OCI-LY7 (cell line): ENCODE measurements at regions of chr1 and their contacts with region 1.

Region 1: DNA sequence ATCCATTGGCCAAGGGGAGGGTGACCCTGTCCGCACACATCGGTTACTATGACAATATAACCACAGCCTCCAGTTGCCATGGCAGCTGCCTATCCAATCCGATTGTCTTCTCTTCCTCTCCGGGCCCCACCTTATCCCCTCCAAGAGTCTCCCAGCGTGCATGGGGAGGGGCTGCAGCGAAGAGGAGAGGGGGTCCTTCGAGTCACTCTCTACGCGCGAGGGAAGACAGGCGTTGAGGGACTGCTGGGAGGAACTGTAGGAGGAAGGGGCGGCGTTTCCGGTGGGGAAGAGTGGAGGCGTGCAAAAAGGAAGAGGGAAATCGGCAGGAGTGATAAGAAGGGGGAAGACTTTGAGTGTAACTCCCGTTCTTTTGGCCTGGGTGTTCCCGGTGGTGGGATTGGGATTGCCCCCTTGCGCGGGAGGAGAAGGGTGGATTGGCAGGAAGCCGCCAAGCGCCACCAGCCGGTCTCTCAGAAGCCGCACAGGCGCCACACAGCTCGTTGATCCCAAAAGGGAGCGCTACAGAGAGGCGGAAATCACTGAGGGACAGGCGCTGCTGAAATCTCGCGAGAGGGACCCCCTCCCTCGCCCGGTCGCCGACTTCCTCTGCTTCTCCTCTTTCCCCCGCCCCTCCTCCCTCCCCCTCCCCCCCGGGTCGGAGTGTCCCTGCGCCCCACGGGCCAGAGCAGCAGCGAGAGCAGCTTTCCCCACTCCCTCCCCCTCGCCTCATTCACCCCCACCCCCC is 384 bp upstream of the SMG7 start:
- DNase-seq: peak; percentile 94
- H3K4me3 ChIP-seq: peak overlapping the region; percentile 95
- H3K27ac ChIP-seq: peak overlapping the region; percentile 88
- H3K4me1 ChIP-seq: peaks cover 44% of the 10 kb centered on the region
- CTCF ChIP-seq: no peak

Region 2: DNA sequence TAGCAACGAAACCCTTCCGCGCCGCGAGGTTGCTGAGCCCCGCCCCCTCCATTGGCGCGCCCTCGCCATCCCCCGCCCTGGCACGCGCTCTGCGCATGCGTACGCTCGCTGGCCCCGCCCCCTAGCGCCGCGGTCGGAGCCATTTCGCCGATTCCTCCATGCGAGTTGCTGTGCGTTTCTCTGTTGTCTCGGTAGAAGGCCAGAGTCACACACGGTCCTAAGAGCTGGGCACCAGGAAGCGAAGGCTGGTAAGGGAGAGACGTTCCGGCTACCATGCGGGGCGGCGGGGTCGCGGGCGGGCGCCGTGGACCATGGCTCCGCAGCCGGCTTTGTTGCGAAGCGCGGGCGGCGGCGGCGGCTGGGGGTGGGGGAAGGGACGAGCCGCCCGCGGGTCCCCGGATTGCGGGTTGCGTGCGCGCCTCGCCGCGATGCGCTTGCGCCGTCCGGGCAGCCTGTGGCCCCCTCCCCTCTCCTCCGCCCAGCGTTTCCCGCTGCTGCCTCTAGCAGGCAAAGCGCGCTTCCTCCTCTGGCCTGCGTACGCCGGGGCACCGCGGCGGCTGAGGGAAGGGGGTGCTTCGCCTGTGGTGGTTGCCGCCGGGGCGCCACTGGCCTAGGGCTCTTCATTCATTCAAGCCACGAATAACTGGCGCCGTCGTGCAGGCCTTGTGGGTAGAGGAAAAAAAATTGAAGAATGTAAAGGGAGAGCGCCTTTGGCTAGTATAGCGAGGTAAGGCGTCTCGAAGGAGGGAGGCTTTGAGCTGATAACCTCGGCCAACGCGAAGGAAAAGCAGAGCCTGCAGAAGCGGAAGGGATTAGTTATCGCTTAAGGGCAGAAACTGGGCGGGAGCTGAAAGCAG is 632.5 kb before region 1 on chr1 and contains the start of gene DHX9:
- CTCF ChIA-PET with region 1: no interaction called
- POLR2A ChIA-PET with region 1: no interaction called
- intact Hi-C with region 1: loop called (anchors 10 kb)
- DNase-seq: peak; percentile 95
- H3K4me3 ChIP-seq: peak within 1 kb of the TSS; percentile 98
- H3K27ac ChIP-seq: peak within 1 kb of the TSS; percentile 87
- H3K4me1 ChIP-seq: peaks cover 35% of the 10 kb centered on the region
- CTCF ChIP-seq: peak; percentile 55
- total RNA-seq, gene DHX9: 217 and 276 TPM in 2 replicates

Region 3: DNA sequence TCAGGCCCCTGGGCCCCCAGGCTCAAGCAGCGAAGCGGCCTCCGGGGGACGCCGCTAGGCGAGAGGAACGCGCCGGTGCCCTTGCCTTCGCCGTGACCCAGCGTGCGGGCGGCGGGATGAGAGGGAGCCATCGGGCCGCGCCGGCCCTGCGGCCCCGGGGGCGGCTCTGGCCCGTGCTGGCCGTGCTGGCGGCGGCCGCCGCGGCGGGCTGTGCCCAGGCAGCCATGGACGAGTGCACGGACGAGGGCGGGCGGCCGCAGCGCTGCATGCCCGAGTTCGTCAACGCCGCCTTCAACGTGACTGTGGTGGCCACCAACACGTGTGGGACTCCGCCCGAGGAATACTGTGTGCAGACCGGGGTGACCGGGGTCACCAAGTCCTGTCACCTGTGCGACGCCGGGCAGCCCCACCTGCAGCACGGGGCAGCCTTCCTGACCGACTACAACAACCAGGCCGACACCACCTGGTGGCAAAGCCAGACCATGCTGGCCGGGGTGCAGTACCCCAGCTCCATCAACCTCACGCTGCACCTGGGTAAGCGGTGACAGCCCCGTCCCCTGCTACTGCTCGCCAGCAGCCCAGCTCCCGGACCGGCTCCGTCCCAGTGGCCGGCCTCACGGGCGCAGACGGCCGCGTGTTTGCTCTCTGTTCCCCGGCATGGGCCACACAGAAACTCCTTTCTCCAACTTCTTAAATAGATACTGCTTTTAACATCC is 448.2 kb before region 1 on chr1:
- CTCF ChIA-PET with region 1: no interaction called
- POLR2A ChIA-PET with region 1: no interaction called
- intact Hi-C with region 1: loop called (anchors 10 kb)
- DNase-seq: peak; percentile 87
- H3K4me3 ChIP-seq: peak overlapping the region; percentile 77
- H3K27ac ChIP-seq: peak overlapping the region; percentile 54
- H3K4me1 ChIP-seq: peaks cover 51% of the 10 kb centered on the region
- CTCF ChIP-seq: peak; percentile 71

Region 4: GRCh38 chr1:183493548-183494246 is 21.8 kb after region 1 on chr1:
- CTCF ChIA-PET with region 1: interaction called, 4 read pairs
- POLR2A ChIA-PET with region 1: interaction called, 14 read pairs
- intact Hi-C with region 1: no loop called
- DNase-seq: no peak
- H3K4me3 ChIP-seq: no peak overlapping the region
- H3K27ac ChIP-seq: no peak overlapping the region
- H3K4me1 ChIP-seq: peaks cover 98% of the 10 kb centered on the region
- CTCF ChIP-seq: no peak

Region 5: GRCh38 chr1:183543619-183544204 is 71.8 kb after region 1 on chr1:
- CTCF ChIA-PET with region 1: no interaction called
- POLR2A ChIA-PET with region 1: interaction called, 8 read pairs
- intact Hi-C with region 1: loop called (anchors 1 kb)
- DNase-seq: peak; percentile 67
- H3K4me3 ChIP-seq: no peak overlapping the region
- H3K27ac ChIP-seq: no peak overlapping the region
- H3K4me1 ChIP-seq: peaks cover 54% of the 10 kb centered on the region
- CTCF ChIP-seq: peak; percentile 87

Region 6: DNA sequence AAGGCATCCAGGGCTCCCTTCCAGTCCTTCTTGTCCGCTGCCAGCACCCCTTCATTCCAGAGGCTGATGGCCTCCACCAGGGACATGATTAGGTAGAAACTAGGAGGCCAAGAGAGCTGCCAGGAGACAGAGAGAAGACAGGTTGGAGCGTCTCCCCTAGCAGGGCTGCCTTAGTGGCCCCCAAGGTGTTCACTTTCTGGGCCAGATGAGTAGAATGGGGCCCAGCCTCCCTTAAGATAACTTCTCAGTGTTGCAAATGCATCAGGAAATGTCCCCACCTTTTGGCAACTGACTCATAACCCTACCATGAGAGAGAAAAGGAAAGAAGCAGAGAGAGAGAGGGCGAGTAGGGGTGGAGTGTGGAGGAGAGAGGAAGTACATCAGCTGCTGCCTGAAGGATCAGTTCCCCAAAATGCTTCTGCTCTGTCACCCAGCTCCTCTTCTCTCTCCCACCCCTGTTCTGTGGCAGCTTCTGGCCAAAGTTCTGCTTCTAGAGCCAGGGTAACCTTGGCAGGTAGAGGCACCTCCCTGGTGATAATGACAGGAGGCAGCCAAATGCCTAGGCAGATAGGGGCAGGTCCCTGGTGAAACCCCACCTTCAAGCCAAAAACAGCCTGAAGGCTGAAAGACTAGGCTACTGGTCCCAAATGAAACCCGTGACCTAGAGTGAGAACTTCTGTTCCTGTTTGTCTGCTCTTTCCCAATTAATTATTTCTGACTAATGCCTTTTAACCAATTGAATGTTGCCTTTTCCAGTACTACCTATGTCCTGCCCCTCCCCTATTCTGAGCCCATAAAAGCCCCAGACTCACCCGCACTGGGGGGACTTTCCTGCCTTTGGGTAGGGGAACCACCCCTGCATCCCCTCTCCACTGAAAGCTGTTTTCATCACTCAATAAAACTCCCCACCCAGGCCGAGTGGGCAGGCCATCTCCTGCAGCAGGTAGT is 118.6 kb after region 1 on chr1 and contains the start of gene NCF2:
- CTCF ChIA-PET with region 1: no interaction called
- POLR2A ChIA-PET with region 1: interaction called, 4 read pairs
- intact Hi-C with region 1: loop called (anchors 2 kb)
- DNase-seq: peak; percentile 89
- H3K4me3 ChIP-seq: peak within 1 kb of the TSS; percentile 62
- H3K27ac ChIP-seq: peak within 1 kb of the TSS; percentile 95
- H3K4me1 ChIP-seq: peaks cover 69% of the 10 kb centered on the region
- CTCF ChIP-seq: peak; percentile 31; the same call in 1 of the 2 replicates
- total RNA-seq, gene NCF2: 4.0 and 5.0 TPM in 2 replicates

Region 7: DNA sequence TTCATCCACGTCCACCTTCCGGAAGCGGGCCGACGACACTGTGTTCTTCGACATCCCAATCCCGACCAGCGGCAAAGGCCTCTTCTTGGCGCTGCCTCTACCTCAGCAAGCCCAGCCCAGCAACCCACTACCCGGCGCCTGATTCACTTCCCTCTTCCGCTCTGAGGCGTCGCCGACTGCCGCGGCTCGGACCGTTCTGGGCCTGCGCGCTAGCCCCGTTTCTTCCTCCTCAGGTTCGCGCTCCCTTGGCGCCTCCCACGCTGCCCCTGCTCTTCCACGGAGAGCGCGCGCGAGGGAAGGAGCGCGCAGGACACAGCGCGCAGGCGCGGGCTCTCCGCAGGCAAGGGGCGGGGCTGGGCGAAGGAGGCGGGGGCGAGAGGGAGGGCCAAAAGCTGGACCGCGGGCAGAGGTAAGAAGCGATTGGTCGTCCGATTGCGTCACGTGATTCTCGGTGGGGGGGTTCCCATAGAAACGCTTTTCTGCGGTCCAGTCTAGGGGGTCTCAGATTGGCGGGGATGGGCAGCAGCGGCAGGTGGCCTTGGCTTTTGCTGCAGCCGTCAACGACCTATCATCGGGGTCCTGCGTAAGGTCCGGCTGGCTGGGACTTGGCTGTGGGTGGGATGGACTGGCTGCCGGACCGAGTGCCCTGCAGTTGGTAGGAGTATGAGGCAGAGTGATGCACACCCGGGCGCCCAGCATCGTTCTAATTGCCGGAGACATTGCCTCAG is 163.9 kb after region 1 on chr1 and contains the start of gene ARPC5:
- CTCF ChIA-PET with region 1: no interaction called
- POLR2A ChIA-PET with region 1: interaction called, 6 read pairs
- intact Hi-C with region 1: loop called (anchors 1 kb)
- DNase-seq: peak; percentile 95
- H3K4me3 ChIP-seq: peak within 1 kb of the TSS; percentile 94
- H3K27ac ChIP-seq: peak within 1 kb of the TSS; percentile 75
- H3K4me1 ChIP-seq: peaks cover 32% of the 10 kb centered on the region
- CTCF ChIP-seq: no peak
- total RNA-seq, gene ARPC5: 116 and 148 TPM in 2 replicates